ENCODE measurements at regions of chr14 and their contacts with region 1.

Region 1: GRCh38 chr14:89748004-89748403 is 206.5 kb downstream of the EFCAB11 start:
- DNase-seq: no peak
- H3K4me3 ChIP-seq: no peak overlapping the region
- H3K27ac ChIP-seq: no peak overlapping the region
- H3K4me1 ChIP-seq: no peaks in the 10 kb centered on the region
- H3K27me3 ChIP-seq: no peaks in the 10 kb centered on the region
- CTCF ChIP-seq: no peak
- POLR2A ChIP-seq: no peak

Region 2: DNA sequence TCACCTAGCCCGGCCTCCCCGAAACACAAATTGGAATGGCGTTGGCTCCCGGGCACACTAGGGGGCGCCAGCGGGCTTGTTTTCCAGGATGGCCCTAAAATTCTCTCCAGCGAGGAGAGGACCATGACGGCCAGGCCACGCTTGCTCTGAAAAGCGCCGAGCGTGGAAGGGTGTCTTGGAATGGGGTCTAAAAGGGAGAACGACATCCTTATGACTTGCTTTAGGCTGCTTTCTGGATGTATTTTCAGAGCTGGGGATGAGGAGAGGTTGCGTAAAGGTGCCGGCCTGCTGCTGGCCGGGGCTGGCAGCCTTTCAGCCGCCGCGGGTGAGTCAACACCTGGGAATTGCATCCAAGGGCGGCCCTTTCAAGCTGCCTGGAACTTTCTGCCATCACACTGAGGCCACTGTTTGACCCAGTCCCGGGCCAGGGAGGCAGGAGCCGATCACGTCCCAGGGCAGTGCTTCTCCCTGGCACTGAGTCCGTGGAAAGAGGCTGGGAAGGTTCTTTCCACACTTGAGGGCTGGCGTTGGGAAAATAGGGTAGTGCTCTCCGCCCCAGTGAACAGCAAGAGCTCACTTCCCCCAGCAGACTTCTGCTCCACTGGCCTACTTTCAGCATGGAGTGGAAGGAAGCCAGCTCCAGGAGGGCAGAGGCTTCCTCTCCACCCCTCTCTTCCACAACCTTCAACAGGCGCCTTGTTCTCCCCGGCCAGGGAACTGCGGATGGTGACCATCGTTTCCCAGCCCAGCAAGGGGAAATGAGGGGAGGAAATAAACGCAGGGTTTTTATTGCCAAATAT is 707.3 kb before region 1 on chr14:
- intact Hi-C with region 1: loop called (anchors 10 kb)
- DNase-seq: peak; percentile 95
- H3K4me3 ChIP-seq: peak overlapping the region; percentile 47 to 51
- H3K27ac ChIP-seq: peak overlapping the region; percentile 78 to 83
- H3K4me1 ChIP-seq: no peaks in the 10 kb centered on the region
- H3K27me3 ChIP-seq: no peaks in the 10 kb centered on the region
- CTCF ChIP-seq: peak; percentile 92 to 95 (median 94)
- POLR2A ChIP-seq: no peak

Region 3: GRCh38 chr14:89701211-89702043 is 46.6 kb before region 1 on chr14:
- intact Hi-C with region 1: no loop called
- DNase-seq: peak; percentile 80
- H3K4me3 ChIP-seq: peak overlapping the region; percentile 59 to 75
- H3K27ac ChIP-seq: peak overlapping the region; percentile 46 to 80
- H3K4me1 ChIP-seq: peaks cover 6% of the 10 kb centered on the region
- H3K27me3 ChIP-seq: no peaks in the 10 kb centered on the region
- CTCF ChIP-seq: no peak
- POLR2A ChIP-seq: no peak

Region 4: DNA sequence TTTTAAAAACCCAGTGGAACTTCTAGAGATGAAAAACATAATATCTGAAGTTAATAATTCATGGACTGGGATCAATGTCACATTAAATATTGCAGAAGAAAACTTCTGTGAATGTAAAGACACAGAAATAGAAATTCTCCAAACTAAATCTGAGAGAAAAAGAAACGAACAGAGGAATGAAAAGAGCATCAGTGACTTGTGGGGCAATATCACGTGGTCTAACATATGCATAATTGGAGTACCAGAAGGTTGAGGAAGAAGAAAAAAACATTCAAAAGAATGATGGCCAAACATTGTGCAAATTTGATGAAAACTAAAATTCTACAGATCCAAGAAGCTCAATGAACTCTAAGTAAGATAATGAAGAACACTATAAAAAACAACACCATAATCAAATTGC is 75.7 kb after region 1 on chr14:
- intact Hi-C with region 1: no loop called
- DNase-seq: no peak
- H3K4me3 ChIP-seq: no peak overlapping the region
- H3K27ac ChIP-seq: no peak overlapping the region
- H3K4me1 ChIP-seq: no peaks in the 10 kb centered on the region
- H3K27me3 ChIP-seq: no peaks in the 10 kb centered on the region
- CTCF ChIP-seq: no peak
- POLR2A ChIP-seq: no peak